SK-N-SH (cell line): ENCODE measurements at regions of chr1 and their contacts with region 1.

Region 1: GRCh38 chr1:52911541-52911940 is 10.0 kb downstream of the ECHDC2 start:
- DNase-seq: no peak
- H3K4me3 ChIP-seq: no peak overlapping the region
- H3K27ac ChIP-seq: no peak overlapping the region
- H3K4me1 ChIP-seq: no peaks in the 10 kb centered on the region
- H3K27me3 ChIP-seq: no peaks in the 10 kb centered on the region
- CTCF ChIP-seq: no peak
- EP300 ChIP-seq: no peak
- RAD21 ChIP-seq: no peak

Region 2: DNA sequence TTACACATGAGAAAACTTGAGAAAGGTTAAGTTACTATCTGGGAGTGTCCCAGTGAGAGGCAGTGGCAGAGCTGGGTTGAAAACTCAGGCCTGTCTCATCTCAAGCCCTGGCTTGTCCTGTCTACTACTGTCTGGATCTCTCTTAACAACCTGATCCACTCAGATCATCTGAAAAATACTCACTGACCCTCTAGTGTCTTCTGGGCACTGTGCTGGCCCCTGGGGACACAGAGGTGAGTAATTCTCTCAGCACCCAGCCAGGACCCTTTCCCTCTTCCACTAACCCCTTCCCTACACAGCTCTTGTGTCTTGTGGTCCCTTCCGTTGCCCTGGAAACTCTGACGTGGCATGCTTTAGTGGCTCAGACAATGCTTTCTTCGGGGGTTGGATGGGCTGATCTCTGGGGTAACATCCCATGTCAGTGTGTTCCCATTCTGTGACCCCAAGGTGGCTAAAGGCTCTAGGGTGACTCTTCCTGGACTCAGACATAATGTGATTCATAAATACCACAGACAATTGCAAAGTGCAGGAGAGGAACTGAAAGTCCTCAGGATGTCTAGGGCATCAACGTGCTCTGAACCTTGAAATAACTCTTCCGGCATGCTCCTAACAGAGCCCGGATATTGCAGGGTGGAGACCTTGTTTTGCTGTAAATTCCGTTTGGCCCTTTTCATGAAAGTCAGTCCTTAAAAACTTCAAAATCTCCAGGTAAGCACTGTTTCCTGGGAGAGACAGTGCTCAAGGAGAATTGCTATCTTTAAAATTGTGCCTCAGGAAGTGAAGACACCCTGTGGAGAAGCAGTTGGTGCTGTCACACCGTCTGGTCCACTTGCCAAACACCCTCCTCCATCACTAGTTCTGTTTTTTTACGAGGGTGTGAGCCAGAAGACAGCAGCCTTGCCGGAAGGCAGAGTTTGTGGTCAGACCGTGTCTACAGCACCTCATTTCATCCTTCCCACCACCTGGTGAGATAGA is 274.5 kb before region 1 on chr1:
- CTCF ChIA-PET with region 1: no interaction called
- POLR2A ChIA-PET with region 1: no interaction called
- DNase-seq: no peak
- H3K4me3 ChIP-seq: no peak overlapping the region
- H3K27ac ChIP-seq: no peak overlapping the region
- H3K4me1 ChIP-seq: peaks cover 0 to 5% of the 10 kb centered on the region in 2 experiments; a peak in 1 of 4 replicates
- H3K27me3 ChIP-seq: peaks cover 6% of the 10 kb centered on the region; the same call in 1 of the 2 replicates
- CTCF ChIP-seq: no peak
- EP300 ChIP-seq: no peak
- RAD21 ChIP-seq: no peak

Region 3: GRCh38 chr1:53176452-53177208 is 265.1 kb after region 1 on chr1:
- CTCF ChIA-PET with region 1: interaction called, 65 read pairs
- POLR2A ChIA-PET with region 1: no interaction called
- DNase-seq: peak; percentile 58
- H3K4me3 ChIP-seq: no peak overlapping the region
- H3K27ac ChIP-seq: no peak overlapping the region; a peak in 1 of 4 replicates
- H3K4me1 ChIP-seq: peaks cover 7 to 9% of the 10 kb centered on the region in 2 experiments; a peak in 2 of 4 replicates
- H3K27me3 ChIP-seq: no peaks in the 10 kb centered on the region
- CTCF ChIP-seq: no peak
- EP300 ChIP-seq: no peak
- RAD21 ChIP-seq: peak; percentile 84